ENCODE measurements at regions of chr18 and their contacts with region 1.

Region 1: DNA sequence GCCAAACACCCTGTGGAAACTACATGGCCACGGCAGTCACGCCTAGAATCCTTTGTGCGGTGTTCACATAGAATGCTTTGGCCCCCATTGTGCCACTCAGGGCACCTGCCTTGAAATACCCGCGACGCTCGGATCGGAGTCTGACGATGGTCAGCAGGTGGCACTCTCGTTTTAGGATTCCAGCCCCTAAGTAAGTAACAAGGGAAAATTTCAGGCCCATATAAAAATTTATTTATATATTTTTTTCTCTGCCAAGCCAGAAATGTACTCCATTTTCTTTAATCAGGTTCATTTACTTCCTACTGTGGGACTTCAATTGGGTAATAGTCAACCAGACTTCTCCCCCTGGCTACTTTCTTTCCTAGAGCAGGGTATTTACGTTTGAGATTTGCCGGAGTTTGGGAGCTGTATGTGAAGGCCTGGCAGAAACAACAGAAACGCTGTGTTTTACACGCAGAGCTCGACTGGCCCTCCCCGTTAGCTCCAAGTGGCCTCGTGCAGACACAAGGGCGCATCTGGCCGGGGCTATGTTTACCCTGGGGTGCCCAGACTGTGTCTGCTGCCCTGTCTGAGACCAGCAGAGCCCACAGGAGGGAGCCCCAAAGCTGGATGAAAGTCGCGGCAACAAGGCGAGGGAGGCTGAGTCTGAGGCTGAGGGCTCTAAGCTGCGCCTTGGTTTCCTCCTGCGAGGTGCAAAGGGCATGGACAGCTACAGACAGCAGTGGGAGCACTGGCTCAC is 41.6 kb downstream of the LRRC30 start:
- DNase-seq: no peak
- H3K4me3 ChIP-seq: peak overlapping the region in 3 of 4 donors; percentile 3 to 51 (median 15)
- H3K27ac ChIP-seq: peak overlapping the region; percentile 35 to 83 (median 71)
- H3K4me1 ChIP-seq: peaks cover 7 to 22% (median 7%) of the 10 kb centered on the region in 3 donors
- H3K27me3 ChIP-seq: no peaks in the 10 kb centered on the region
- CTCF ChIP-seq: peak in 5 of 6 experiments; percentile 20 to 44 (median 37)
- POLR2A ChIP-seq: no peak

Region 2: DNA sequence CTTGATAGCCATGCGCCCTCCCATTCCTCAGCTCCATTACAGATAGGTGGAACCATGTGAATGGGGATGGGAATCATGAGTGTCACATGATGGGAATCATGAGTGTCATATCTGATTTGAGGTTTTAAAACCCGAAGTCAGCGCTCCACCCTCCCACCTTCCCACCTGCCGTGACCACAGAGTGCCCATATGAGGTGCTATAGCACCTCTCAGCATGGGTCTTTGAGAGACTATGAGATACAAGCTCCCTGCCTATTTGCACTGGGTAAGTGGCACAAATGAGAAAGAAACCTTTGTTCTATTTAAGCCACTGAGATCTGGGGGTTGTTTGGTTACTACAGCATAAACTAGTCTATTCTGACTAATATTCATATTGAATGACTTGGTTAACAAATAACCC is 216.1 kb after region 1 on chr18:
- intact Hi-C with region 1: no loop called
- DNase-seq: no peak
- H3K4me3 ChIP-seq: no peak overlapping the region
- H3K27ac ChIP-seq: no peak overlapping the region
- H3K4me1 ChIP-seq: no peaks in the 10 kb centered on the region
- H3K27me3 ChIP-seq: no peaks in the 10 kb centered on the region
- CTCF ChIP-seq: no peak
- POLR2A ChIP-seq: no peak

Region 3: GRCh38 chr18:7566567-7567473 is 294.3 kb after region 1 on chr18 and contains the start of gene PTPRM:
- intact Hi-C with region 1: loop called (anchors 2 kb)
- DNase-seq: peak; percentile 13
- H3K4me3 ChIP-seq: peak within 1 kb of the TSS; percentile 55 to 83 (median 75)
- H3K27ac ChIP-seq: peak within 1 kb of the TSS; percentile 84 to 96 (median 91)
- H3K4me1 ChIP-seq: peaks cover 0 to 47% (median 3%) of the 10 kb centered on the region in 3 donors
- H3K27me3 ChIP-seq: peaks cover 0 to 42% (median 0%) of the 10 kb centered on the region in 4 donors
- CTCF ChIP-seq: peak in 4 of 6 experiments; percentile 44 to 74 (median 60)
- POLR2A ChIP-seq: peak in 2 of 4 donors; percentile 60 to 61
- total RNA-seq, gene PTPRM: 6.5 to 38.7 (median 11.1) TPM

Region 4: DNA sequence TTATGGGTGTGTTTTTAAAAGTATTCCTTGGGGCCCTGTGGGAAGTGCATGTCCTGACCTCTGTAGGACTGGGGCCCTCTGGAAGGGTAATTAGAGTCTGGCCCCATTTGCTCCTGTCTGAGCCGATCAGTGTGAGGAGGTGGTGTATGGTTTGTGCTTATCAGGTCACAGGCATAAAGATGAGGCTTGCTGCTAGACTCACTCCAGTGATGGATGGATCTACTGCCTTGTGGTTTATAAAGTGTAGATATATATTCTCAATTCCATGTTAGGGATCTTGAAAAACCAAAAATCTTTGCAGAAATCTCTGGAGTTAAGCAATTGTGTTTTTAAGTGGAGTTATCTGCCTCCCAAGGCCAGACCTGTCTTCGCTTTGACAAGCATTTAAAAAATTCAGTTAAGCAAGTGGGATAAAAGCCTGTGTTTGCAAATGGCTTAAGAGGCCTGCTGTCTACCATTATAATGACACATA is 477.1 kb after region 1 on chr18:
- intact Hi-C with region 1: loop called (anchors 10 kb)
- DNase-seq: no peak
- H3K4me3 ChIP-seq: no peak overlapping the region
- H3K27ac ChIP-seq: peak overlapping the region in 1 of 4 donors; percentile 17
- H3K4me1 ChIP-seq: peaks cover 0 to 32% (median 11%) of the 10 kb centered on the region in 3 donors
- H3K27me3 ChIP-seq: no peaks in the 10 kb centered on the region
- CTCF ChIP-seq: no peak
- POLR2A ChIP-seq: no peak

Region 5: DNA sequence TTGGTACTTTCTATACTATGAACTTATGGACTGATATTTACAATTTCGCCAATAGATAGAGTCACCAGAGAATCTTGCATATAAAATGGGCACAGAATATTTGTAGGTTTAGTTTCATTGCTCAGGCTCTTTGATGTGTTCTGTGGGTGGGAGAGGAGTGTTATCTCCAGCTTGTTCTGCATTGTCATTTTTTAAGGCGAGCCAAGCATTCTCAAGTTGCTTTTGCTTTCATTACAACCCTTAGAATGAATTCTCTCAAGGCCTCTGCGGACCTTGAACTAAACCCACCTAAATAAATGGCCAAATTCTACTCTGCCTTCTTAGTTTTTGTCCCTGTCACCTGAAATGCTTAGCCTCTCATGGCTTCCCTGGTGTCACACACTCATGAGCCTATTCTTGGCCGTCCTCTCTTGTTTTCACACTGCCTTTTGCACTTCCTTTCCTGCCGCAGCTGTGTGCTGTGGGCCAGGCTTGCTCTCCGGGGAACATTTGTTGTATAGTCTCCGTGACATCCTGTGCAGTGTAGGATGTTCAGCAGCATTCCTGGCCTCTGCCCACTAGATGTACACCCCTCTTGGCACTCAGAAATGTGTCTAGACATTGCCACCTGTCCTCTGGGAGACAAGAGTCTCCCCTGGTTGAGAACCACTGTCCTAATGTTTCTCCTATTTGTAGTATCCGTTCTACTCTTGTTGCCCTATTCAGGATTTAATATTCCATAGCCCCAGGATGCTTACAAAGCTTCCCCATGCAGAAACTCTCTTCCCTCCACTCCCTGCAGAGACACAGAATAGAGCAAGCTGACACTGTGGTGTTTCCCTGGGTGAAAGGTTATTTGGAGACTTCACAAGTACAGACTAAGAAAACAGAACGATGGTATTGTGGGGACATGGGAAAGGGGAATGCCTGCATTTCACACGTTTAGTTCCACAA is 550.2 kb after region 1 on chr18:
- intact Hi-C with region 1: no loop called
- DNase-seq: no peak
- H3K4me3 ChIP-seq: peak overlapping the region in 1 of 4 donors; percentile 38
- H3K27ac ChIP-seq: peak overlapping the region in 2 of 4 donors; percentile 4 to 26
- H3K4me1 ChIP-seq: peaks cover 0 to 12% (median 4%) of the 10 kb centered on the region in 3 donors
- H3K27me3 ChIP-seq: no peaks in the 10 kb centered on the region
- CTCF ChIP-seq: no peak
- POLR2A ChIP-seq: no peak

Region 6: DNA sequence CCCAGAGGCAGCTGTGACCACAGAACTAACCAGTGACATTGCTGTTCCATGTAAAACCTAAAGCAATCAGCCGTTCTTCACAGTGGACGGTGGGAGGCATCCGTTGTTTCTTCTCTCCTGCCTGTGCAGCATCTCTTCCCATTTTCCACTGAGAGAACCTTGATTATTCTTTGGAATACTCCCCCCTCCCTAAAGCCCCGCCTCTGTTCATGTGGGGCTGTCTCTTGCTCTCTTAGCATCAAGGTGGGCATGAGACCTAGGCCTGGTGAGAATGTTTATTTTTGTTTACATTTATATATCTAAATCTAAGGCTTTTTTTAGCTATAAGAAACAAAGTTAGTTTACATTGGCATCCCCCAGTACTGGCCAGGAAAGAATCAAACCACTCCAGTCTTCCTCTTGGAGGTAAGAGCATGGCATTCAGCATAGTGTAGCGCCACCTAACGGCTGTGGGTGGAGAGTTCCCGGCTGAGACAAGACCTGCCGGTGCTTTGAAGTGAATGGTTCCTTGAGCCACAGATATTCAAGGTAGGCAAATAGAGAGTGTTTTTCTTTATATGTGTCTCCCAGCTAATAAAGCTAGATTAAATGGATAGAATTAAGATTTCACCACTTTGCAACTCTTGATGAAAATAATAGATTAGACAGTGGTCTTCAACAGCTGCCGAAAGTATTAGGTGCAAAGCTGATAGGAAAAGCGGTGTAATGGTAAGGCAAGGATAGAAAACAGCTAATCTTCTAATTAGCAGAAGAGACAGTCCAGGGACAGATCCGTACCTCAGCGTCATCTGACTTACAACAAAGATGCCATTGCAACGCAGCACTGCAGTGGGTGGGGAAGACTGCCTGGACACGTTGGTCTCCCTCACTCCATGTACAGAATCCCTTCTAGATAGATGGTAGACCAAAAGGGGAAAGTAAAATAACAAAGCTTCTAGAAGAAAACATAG is 1117.2 kb after region 1 on chr18:
- intact Hi-C with region 1: loop called (anchors 5 kb)
- DNase-seq: no peak
- H3K4me3 ChIP-seq: no peak overlapping the region
- H3K27ac ChIP-seq: no peak overlapping the region
- H3K4me1 ChIP-seq: no peaks in the 10 kb centered on the region
- H3K27me3 ChIP-seq: no peaks in the 10 kb centered on the region
- CTCF ChIP-seq: peak in 5 of 6 experiments; percentile 56 to 75 (median 72)
- POLR2A ChIP-seq: no peak

Measured in esophagus squamous epithelium (tissue), 5 donors.